Activated T-helper 2 cell treated with anti-CD3 and anti-CD28 coated beads, Interferon-gamma antibody, Interleukin-2, Interleukin-4, amounts not matched to agents 10 μg/mL and 5 μg/mL and 100 μg/mL, durations not matched to agents 14 hours and 24 hours and 36 hours (primary cell): ENCODE measurements at regions of chr6 and their contacts with region 1.

Region 1: DNA sequence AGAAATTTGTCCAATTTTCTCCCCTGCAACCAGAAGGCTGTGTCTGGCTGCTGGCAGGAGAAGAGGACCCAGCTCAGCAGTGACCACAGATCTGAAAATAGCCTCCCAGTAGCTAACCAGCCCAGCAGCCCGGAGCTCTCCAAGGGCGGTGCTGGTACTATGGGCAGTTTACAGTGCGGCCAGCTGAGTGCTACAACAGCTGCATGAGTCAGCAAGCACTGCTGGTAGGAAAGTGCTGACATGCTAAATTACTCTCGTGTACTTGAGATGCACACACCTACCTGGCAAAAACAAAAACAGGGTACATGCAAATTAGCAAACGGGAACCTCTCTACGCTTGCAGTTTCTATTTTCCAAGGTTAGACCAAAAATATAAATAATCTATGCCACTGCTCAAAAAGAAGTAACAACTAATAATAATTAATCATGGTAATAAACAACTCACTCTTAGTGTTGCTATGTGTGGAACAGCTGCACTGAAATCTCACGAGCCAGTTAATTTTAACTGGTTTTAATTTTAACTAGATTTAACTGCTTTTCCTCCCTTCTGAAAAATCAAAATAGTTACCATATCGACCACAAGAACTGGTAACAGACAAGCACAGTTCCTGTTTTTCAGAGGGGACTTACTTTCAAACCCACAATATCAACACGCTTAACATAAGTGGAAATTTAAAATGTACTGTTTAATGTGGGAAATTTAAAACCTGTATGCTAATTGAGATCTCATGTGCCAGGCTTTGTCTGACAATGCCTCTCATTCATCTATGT is 10.8 kb downstream of the BACH2 start:
- DNase-seq: peak; percentile 51
- H3K4me3 Mint-ChIP-seq: peak overlapping the region; percentile 71
- H3K27ac Mint-ChIP-seq: peak overlapping the region; percentile 90
- H3K4me1 Mint-ChIP-seq: peaks cover 83% of the 10 kb centered on the region
- H3K27me3 Mint-ChIP-seq: no peaks in the 10 kb centered on the region

Region 2: DNA sequence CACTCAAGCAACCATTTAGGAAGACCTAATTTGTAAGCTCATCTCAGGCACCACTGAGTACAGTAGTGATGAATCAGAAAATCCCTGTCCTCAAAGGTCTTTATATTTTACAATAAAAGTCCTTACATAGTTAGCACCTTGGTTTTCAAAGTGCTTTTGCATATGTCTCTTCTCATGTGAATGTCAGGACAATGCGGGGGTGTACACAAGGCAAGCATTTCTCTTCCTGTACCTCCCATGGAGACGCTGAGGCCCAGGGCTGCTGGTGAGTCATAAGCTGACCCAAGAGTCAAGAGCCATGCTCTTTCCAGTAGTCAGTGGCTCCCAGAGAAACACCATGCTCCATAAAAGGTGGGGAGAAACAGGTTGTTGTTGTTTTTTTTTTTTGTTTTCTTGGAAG is 217.5 kb before region 1 on chr6:
- intact Hi-C with region 1: no loop called
- DNase-seq: no peak
- H3K4me3 Mint-ChIP-seq: peak overlapping the region; percentile 5
- H3K27ac Mint-ChIP-seq: peak overlapping the region; percentile 46
- H3K4me1 Mint-ChIP-seq: peaks cover 74% of the 10 kb centered on the region
- H3K27me3 Mint-ChIP-seq: no peaks in the 10 kb centered on the region

Region 3: GRCh38 chr6:90110971-90111370 is 174.8 kb before region 1 on chr6:
- intact Hi-C with region 1: loop called (anchors 2 kb)
- DNase-seq: peak; percentile 76
- H3K4me3 Mint-ChIP-seq: peak overlapping the region; percentile 0
- H3K27ac Mint-ChIP-seq: peak overlapping the region; percentile 68
- H3K4me1 Mint-ChIP-seq: peaks cover 69% of the 10 kb centered on the region
- H3K27me3 Mint-ChIP-seq: no peaks in the 10 kb centered on the region

Region 4: GRCh38 chr6:90230548-90231215 is 55.1 kb before region 1 on chr6:
- intact Hi-C with region 1: loop called (anchors 1 kb)
- DNase-seq: no peak
- H3K4me3 Mint-ChIP-seq: peak overlapping the region; percentile 7
- H3K27ac Mint-ChIP-seq: peak overlapping the region; percentile 33
- H3K4me1 Mint-ChIP-seq: peaks cover 81% of the 10 kb centered on the region
- H3K27me3 Mint-ChIP-seq: no peaks in the 10 kb centered on the region

Region 5: DNA sequence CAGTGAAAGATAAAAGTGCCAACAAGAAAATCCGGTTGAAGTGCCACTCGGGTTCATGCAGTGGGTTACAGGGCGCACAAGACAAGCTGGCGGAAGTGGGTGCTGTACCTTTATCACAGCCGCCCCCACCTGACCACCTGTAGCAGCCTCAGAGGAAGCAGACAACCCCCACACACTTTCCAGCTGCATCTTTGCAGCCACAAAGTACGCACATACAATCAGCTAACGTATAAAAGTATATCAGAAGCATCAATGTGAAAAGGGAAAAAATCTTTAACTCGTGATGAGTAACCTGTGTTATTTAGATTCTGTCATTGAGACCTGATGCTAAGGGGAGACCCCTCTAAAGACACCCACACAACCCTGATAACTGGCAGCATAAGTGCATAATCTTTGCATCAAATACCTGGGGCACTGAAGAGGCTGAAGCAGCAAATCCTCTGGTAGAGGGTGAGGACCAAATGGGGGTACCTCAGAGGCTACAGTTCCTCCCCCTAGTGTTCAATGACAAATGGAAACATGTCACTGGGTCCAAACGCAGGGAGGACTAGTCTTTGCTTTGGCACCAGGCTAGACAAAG is 11.3 kb before region 1 on chr6:
- intact Hi-C with region 1: loop called (anchors 1 kb)
- DNase-seq: peak; percentile 78
- H3K4me3 Mint-ChIP-seq: peak overlapping the region; percentile 72
- H3K27ac Mint-ChIP-seq: peak overlapping the region; percentile 97
- H3K4me1 Mint-ChIP-seq: peaks cover 84% of the 10 kb centered on the region
- H3K27me3 Mint-ChIP-seq: no peaks in the 10 kb centered on the region

Region 6: GRCh38 chr6:90302322-90302721 is 16.5 kb after region 1 on chr6:
- intact Hi-C with region 1: no loop called
- DNase-seq: no peak
- H3K4me3 Mint-ChIP-seq: no peak overlapping the region
- H3K27ac Mint-ChIP-seq: no peak overlapping the region
- H3K4me1 Mint-ChIP-seq: peaks cover 43% of the 10 kb centered on the region
- H3K27me3 Mint-ChIP-seq: peaks cover 37% of the 10 kb centered on the region

Region 7: GRCh38 chr6:90393232-90393884 is 107.6 kb after region 1 on chr6:
- intact Hi-C with region 1: loop called (anchors 1 kb)
- DNase-seq: peak; percentile 71
- H3K4me3 Mint-ChIP-seq: no peak overlapping the region
- H3K27ac Mint-ChIP-seq: peak overlapping the region; percentile 64
- H3K4me1 Mint-ChIP-seq: peaks cover 74% of the 10 kb centered on the region
- H3K27me3 Mint-ChIP-seq: no peaks in the 10 kb centered on the region

Region 8: DNA sequence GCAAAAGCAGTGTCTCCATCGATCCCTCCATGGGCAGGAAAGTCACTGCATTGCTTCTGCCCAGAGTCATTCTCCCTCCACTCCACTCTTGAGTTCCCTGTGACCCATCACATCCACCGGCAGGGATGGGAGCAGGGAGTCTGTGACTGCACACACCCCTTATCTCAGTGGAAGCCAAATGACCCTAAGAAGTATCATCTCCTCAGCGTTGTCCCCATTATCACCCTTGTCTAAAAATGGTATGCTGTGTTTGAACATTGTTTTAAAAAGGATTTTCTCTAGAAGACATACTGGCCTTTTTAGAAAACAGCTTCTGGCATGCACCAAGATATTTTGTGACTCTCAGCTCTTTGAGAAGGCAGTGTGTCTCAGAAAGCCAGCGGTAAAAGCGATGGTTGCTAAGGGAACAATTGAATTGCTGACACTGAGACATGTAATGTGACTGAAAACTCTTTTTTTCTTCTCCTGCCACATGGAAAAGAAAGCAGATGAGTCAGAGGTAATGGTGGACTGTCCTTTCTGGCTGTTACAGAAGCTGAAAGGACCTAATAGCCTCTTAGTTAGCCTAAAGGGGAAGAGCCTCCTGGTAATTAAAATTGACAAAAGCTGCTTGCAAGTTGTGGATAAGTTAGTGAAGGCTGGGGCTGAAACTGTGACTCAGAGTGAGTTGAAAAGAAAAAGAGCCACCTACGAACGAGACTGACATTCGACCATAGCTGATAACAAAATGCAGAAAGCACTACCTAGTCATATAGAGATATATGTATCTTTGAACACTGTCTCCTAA is 180.6 kb after region 1 on chr6:
- intact Hi-C with region 1: loop called (anchors 2 kb)
- DNase-seq: no peak
- H3K4me3 Mint-ChIP-seq: peak overlapping the region; percentile 37
- H3K27ac Mint-ChIP-seq: peak overlapping the region; percentile 94
- H3K4me1 Mint-ChIP-seq: peaks cover 93% of the 10 kb centered on the region
- H3K27me3 Mint-ChIP-seq: no peaks in the 10 kb centered on the region